PC-3 (cell line): ENCODE measurements at regions of chr19 and their contacts with region 1.

Region 1: GRCh38 chr19:2453386-2454025 is 3.3 kb downstream of the LMNB2 start:
- DNase-seq: no peak
- ATAC-seq: no peak
- H3K4me3 ChIP-seq: no peak overlapping the region
- H3K27ac ChIP-seq: no peak overlapping the region
- H3K4me1 ChIP-seq: peaks cover 11% of the 10 kb centered on the region; the same call in 1 of the 2 replicates
- H3K27me3 ChIP-seq: no peaks in the 10 kb centered on the region
- CTCF ChIP-seq: no peak

Region 2: GRCh38 chr19:2494444-2495129 is 41.1 kb after region 1 on chr19:
- CTCF ChIA-PET with region 1: no interaction called
- POLR2A ChIA-PET with region 1: no interaction called
- intact Hi-C with region 1: no loop called
- DNase-seq: peak; percentile 61
- ATAC-seq: peak; percentile 45
- H3K4me3 ChIP-seq: peak overlapping the region; percentile 98
- H3K27ac ChIP-seq: peak overlapping the region; percentile 92
- H3K4me1 ChIP-seq: peaks cover 46% of the 10 kb centered on the region
- H3K27me3 ChIP-seq: no peaks in the 10 kb centered on the region
- CTCF ChIP-seq: no peak

Region 3: GRCh38 chr19:2837430-2837829 is 383.9 kb after region 1 on chr19:
- CTCF ChIA-PET with region 1: interaction called, 16 read pairs
- POLR2A ChIA-PET with region 1: no interaction called
- intact Hi-C with region 1: no loop called
- DNase-seq: no peak
- ATAC-seq: no peak
- H3K4me3 ChIP-seq: no peak overlapping the region
- H3K27ac ChIP-seq: no peak overlapping the region
- H3K4me1 ChIP-seq: no peaks in the 10 kb centered on the region; the same call in 1 of the 2 replicates
- H3K27me3 ChIP-seq: no peaks in the 10 kb centered on the region
- CTCF ChIP-seq: no peak